Sigmoid colon (tissue), 7 donors: ENCODE measurements at regions of chr10 and their contacts with region 1.

Region 1: GRCh38 chr10:95601116-95601719 is 40.0 kb upstream of the SORBS1 start:
- DNase-seq: peak; percentile 92
- H3K4me3 ChIP-seq: no peak overlapping the region
- H3K27ac ChIP-seq: peak overlapping the region; percentile 52 to 95 (median 86)
- H3K4me1 ChIP-seq: peaks cover 0 to 45% (median 39%) of the 10 kb centered on the region in 4 donors
- H3K27me3 ChIP-seq: no peaks in the 10 kb centered on the region
- CTCF ChIP-seq: peak; percentile 83 to 97 (median 92)
- EP300 ChIP-seq: no peak
- POLR2A ChIP-seq: no peak

Region 2: GRCh38 chr10:95374597-95375209 is 226.5 kb before region 1 on chr10:
- intact Hi-C with region 1: loop called (anchors 1 kb)
- DNase-seq: peak; percentile 90
- H3K4me3 ChIP-seq: no peak overlapping the region
- H3K27ac ChIP-seq: peak overlapping the region; percentile 34 to 96 (median 72)
- H3K4me1 ChIP-seq: peaks cover 0 to 74% (median 56%) of the 10 kb centered on the region in 4 donors
- H3K27me3 ChIP-seq: no peaks in the 10 kb centered on the region
- CTCF ChIP-seq: peak; percentile 84 to 92 (median 90)
- EP300 ChIP-seq: no peak
- POLR2A ChIP-seq: no peak

Region 3: DNA sequence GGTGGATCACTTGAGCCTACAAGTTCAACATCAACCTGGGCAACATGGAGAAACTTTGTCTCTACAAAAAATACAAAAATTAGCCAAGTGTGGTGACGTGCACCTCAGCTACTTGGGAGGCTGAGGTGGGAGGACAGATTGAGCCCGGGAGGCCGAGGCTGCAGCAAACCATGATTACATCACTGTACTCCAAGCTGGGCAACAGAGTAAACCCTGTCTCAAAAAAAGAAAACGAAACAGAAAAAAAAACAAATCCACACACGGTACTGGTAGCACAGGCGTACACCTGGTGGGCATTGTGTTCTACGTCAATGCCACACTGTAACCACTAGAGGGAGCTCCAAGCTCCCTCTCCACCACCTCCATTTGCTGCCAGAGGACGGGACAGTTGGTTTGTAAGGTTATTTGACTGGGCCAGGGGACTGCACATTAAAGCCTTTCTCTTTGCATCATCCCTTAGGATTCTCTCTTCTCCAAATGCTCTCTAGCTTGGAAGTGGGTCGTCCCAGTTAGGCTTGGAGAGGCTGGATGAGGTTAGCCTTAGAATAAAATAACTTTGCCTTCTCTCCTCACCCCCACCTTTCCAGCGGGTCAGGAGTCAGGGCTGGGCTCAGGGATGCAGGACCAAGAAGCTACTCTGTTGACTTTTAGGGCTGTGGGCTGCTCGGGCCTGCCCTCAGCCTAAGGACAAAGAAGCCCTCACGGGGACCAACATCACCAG is 170.8 kb before region 1 on chr10:
- intact Hi-C with region 1: loop called (anchors 1 kb)
- DNase-seq: peak; percentile 86
- H3K4me3 ChIP-seq: no peak overlapping the region
- H3K27ac ChIP-seq: peak overlapping the region; percentile 84 to 98 (median 90)
- H3K4me1 ChIP-seq: peaks cover 0 to 97% (median 93%) of the 10 kb centered on the region in 4 donors
- H3K27me3 ChIP-seq: no peaks in the 10 kb centered on the region
- CTCF ChIP-seq: peak; percentile 90 to 93 (median 92)
- EP300 ChIP-seq: no peak
- POLR2A ChIP-seq: no peak

Region 4: GRCh38 chr10:95688648-95689047 is 87.4 kb after region 1 on chr10:
- intact Hi-C with region 1: no loop called
- DNase-seq: no peak
- H3K4me3 ChIP-seq: no peak overlapping the region
- H3K27ac ChIP-seq: no peak overlapping the region
- H3K4me1 ChIP-seq: peaks cover 0 to 17% (median 15%) of the 10 kb centered on the region in 4 donors
- H3K27me3 ChIP-seq: no peaks in the 10 kb centered on the region
- CTCF ChIP-seq: no peak
- EP300 ChIP-seq: no peak
- POLR2A ChIP-seq: no peak